ENCODE measurements at regions of chr1 and their contacts with region 1.

Region 1: DNA sequence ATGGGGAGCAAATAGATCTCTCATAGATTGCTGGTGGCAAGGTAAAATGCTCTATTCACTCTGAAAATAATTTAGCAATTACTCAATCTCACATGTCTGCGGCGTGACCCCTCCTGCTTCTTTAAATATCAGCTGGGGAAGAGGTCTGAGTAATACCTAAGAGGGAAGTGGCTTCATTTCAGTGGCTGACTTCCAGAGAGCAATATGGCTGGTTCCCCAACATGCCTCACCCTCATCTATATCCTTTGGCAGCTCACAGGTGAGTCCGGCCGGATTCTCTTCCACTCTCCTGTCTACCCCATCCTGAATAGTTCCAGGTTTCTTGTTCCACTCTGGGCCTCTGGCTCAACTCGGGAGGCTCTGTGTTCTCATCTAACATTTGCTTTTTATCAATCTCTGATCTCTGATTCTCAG is at the start of gene SLAMF7:
- DNase-seq: peak in 7 of 9 experiments; percentile 24 to 85 (median 57)
- ATAC-seq: peak; percentile 76
- H3K4me3 ChIP-seq: peak within 1 kb of the TSS; percentile 22 to 52
- H3K4me3 Mint-ChIP-seq: peak within 1 kb of the TSS; percentile 84
- H3K27ac ChIP-seq: peak within 1 kb of the TSS in 1 of 2 experiments; percentile 79
- H3K27ac Mint-ChIP-seq: peak within 1 kb of the TSS; percentile 86
- H3K4me1 ChIP-seq: peaks cover 29% of the 10 kb centered on the region
- H3K4me1 Mint-ChIP-seq: peaks cover 58% of the 10 kb centered on the region
- H3K27me3 ChIP-seq: no peaks in the 10 kb centered on the region
- H3K27me3 Mint-ChIP-seq: no peaks in the 10 kb centered on the region
- CTCF ChIP-seq: no peak
- total RNA-seq, gene SLAMF7: 13.3 to 14.8 TPM

Region 2: GRCh38 chr1:160755911-160756848 is 17.1 kb after region 1 on chr1:
- CTCF ChIA-PET with region 1: interaction called, 279 read pairs
- POLR2A ChIA-PET with region 1: interaction called, 19 read pairs
- intact Hi-C with region 1: loop called in 1 of 2 experiments (anchors 1 kb)
- DNase-seq: peak in 4 of 9 experiments; percentile 26 to 91 (median 70)
- ATAC-seq: peak; percentile 63
- H3K4me3 ChIP-seq: peak overlapping the region in 1 of 2 experiments; percentile 3
- H3K4me3 Mint-ChIP-seq: peak overlapping the region; percentile 37
- H3K27ac ChIP-seq: peak overlapping the region; percentile 34 to 71
- H3K27ac Mint-ChIP-seq: peak overlapping the region; percentile 94
- H3K4me1 ChIP-seq: peaks cover 31% of the 10 kb centered on the region
- H3K4me1 Mint-ChIP-seq: peaks cover 49% of the 10 kb centered on the region
- H3K27me3 ChIP-seq: no peaks in the 10 kb centered on the region
- H3K27me3 Mint-ChIP-seq: no peaks in the 10 kb centered on the region
- CTCF ChIP-seq: no peak

Region 3: GRCh38 chr1:161359291-161359690 is 620.2 kb after region 1 on chr1:
- CTCF ChIA-PET with region 1: no interaction called
- POLR2A ChIA-PET with region 1: no interaction called
- intact Hi-C with region 1: no loop called
- DNase-seq: no peak
- ATAC-seq: no peak
- H3K4me3 ChIP-seq: no peak overlapping the region
- H3K4me3 Mint-ChIP-seq: no peak overlapping the region
- H3K27ac ChIP-seq: no peak overlapping the region
- H3K27ac Mint-ChIP-seq: peak overlapping the region; percentile 8
- H3K4me1 ChIP-seq: no peaks in the 10 kb centered on the region
- H3K4me1 Mint-ChIP-seq: peaks cover 8% of the 10 kb centered on the region
- H3K27me3 ChIP-seq: no peaks in the 10 kb centered on the region
- H3K27me3 Mint-ChIP-seq: no peaks in the 10 kb centered on the region
- CTCF ChIP-seq: no peak

Measured in CD8-positive, alpha-beta T cell (primary cell).